Breast epithelium (tissue), 4 donors: ENCODE measurements at regions of chr22 and their contacts with region 1.

Region 1: GRCh38 chr22:45499746-45500145 is 2.9 kb upstream of the FBLN1 start:
- DNase-seq: no peak
- H3K4me3 ChIP-seq: no peak overlapping the region
- H3K27ac ChIP-seq: peak overlapping the region in 1 of 2 donors; percentile 38
- H3K4me1 ChIP-seq: no peaks in the 10 kb centered on the region
- H3K27me3 ChIP-seq: peaks cover 0 to 11% of the 10 kb centered on the region in 2 donors
- CTCF ChIP-seq: no peak
- POLR2A ChIP-seq: no peak

Region 2: GRCh38 chr22:45531441-45532238 is 31.9 kb after region 1 on chr22:
- intact Hi-C with region 1: loop called (anchors 2 kb)
- DNase-seq: no peak
- H3K4me3 ChIP-seq: no peak overlapping the region
- H3K27ac ChIP-seq: peak overlapping the region; percentile 69 to 82
- H3K4me1 ChIP-seq: no peaks in the 10 kb centered on the region
- H3K27me3 ChIP-seq: no peaks in the 10 kb centered on the region
- CTCF ChIP-seq: no peak
- POLR2A ChIP-seq: no peak

Region 3: GRCh38 chr22:47125603-47126002 is 1625.9 kb after region 1 on chr22:
- intact Hi-C with region 1: no loop called
- DNase-seq: no peak
- H3K4me3 ChIP-seq: no peak overlapping the region
- H3K27ac ChIP-seq: no peak overlapping the region
- H3K4me1 ChIP-seq: no peaks in the 10 kb centered on the region
- H3K27me3 ChIP-seq: no peaks in the 10 kb centered on the region
- CTCF ChIP-seq: no peak
- POLR2A ChIP-seq: no peak